Activated CD4-positive, alpha-beta T cell treated with anti-CD3 and anti-CD28 coated beads, Interleukin-2, amount 10 ng/mL, durations not matched to agents 24 days and 14 days (primary cell): ENCODE measurements at regions of chr18 and their contacts with region 1.

Region 1: GRCh38 chr18:25136416-25137196 is 215.4 kb downstream of the ZNF521 start:
- DNase-seq: no peak
- H3K4me3 Mint-ChIP-seq: no peak overlapping the region
- H3K27ac Mint-ChIP-seq: no peak overlapping the region
- H3K4me1 Mint-ChIP-seq: no peaks in the 10 kb centered on the region
- H3K27me3 Mint-ChIP-seq: no peaks in the 10 kb centered on the region

Region 2: DNA sequence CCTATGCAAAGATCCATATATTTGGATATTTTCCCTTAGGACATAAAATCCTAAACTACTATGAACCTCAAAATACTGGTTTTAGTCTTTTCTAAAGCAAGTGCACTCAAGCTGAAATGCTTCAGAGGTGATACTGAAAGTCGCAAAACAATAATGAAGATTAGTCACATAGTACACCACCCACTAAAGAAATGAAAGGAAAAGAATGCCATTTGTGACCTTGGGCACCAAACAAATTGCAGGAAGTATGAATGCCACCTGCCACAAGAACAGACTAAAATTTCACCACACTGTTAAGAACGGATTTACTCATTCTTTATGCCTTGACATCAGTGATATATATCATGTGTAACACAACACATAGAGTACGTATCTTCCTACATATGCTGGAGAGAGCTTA is 53.9 kb after region 1 on chr18:
- intact Hi-C with region 1: loop called (anchors 10 kb)
- DNase-seq: no peak
- H3K4me3 Mint-ChIP-seq: no peak overlapping the region
- H3K27ac Mint-ChIP-seq: no peak overlapping the region
- H3K4me1 Mint-ChIP-seq: no peaks in the 10 kb centered on the region
- H3K27me3 Mint-ChIP-seq: no peaks in the 10 kb centered on the region

Region 3: GRCh38 chr18:25373432-25374179 is 237.0 kb after region 1 on chr18:
- intact Hi-C with region 1: no loop called
- DNase-seq: no peak
- H3K4me3 Mint-ChIP-seq: no peak overlapping the region
- H3K27ac Mint-ChIP-seq: no peak overlapping the region
- H3K4me1 Mint-ChIP-seq: no peaks in the 10 kb centered on the region
- H3K27me3 Mint-ChIP-seq: no peaks in the 10 kb centered on the region